ENCODE measurements at regions of chr11 and their contacts with region 1.

Region 1: GRCh38 chr11:70191495-70192140 is 11.5 kb upstream of the FADD start:
- DNase-seq: peak; percentile 36 to 61
- ATAC-seq: peak; percentile 47 to 77 (median 71)
- H3K4me3 ChIP-seq: no peak overlapping the region
- H3K4me3 Mint-ChIP-seq: no peak overlapping the region
- H3K27ac ChIP-seq: no peak overlapping the region
- H3K27ac Mint-ChIP-seq: no peak overlapping the region
- H3K4me1 ChIP-seq: peaks cover 4% of the 10 kb centered on the region
- H3K4me1 Mint-ChIP-seq: peaks cover 5 to 9% of the 10 kb centered on the region in 2 donors
- H3K27me3 ChIP-seq: peaks cover 5% of the 10 kb centered on the region
- H3K27me3 Mint-ChIP-seq: peaks cover 0 to 6% of the 10 kb centered on the region in 2 donors
- CTCF ChIP-seq: peak; percentile 43

Region 2: DNA sequence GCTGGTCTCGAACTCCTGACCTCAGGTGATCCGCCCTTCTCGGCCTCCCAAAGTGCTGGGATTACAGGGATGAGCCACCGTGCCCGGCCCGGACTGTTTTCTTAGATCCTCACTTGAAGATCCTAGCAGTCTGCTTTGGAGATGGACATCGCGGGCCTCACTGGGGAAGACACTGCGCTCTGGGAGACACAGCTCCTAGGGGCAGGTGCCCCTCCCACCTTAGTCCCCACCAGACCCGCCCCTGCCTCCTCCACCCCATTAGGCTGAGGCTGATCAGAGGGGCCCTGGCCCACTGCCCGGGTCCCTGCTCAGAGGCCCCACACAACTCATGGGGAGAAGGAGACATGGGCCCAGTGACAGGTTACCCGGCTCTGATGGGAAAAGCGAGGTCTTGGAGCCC is 505.2 kb before region 1 on chr11:
- intact Hi-C with region 1: loop called (anchors 5 kb)
- DNase-seq: no peak
- ATAC-seq: no peak
- H3K4me3 ChIP-seq: no peak overlapping the region
- H3K4me3 Mint-ChIP-seq: no peak overlapping the region
- H3K27ac ChIP-seq: no peak overlapping the region
- H3K27ac Mint-ChIP-seq: no peak overlapping the region
- H3K4me1 ChIP-seq: peaks cover 7% of the 10 kb centered on the region
- H3K4me1 Mint-ChIP-seq: peaks cover 0 to 9% of the 10 kb centered on the region in 2 donors
- H3K27me3 ChIP-seq: peaks cover 5% of the 10 kb centered on the region
- H3K27me3 Mint-ChIP-seq: peaks cover 26 to 27% of the 10 kb centered on the region in 2 donors
- CTCF ChIP-seq: no peak

Region 3: DNA sequence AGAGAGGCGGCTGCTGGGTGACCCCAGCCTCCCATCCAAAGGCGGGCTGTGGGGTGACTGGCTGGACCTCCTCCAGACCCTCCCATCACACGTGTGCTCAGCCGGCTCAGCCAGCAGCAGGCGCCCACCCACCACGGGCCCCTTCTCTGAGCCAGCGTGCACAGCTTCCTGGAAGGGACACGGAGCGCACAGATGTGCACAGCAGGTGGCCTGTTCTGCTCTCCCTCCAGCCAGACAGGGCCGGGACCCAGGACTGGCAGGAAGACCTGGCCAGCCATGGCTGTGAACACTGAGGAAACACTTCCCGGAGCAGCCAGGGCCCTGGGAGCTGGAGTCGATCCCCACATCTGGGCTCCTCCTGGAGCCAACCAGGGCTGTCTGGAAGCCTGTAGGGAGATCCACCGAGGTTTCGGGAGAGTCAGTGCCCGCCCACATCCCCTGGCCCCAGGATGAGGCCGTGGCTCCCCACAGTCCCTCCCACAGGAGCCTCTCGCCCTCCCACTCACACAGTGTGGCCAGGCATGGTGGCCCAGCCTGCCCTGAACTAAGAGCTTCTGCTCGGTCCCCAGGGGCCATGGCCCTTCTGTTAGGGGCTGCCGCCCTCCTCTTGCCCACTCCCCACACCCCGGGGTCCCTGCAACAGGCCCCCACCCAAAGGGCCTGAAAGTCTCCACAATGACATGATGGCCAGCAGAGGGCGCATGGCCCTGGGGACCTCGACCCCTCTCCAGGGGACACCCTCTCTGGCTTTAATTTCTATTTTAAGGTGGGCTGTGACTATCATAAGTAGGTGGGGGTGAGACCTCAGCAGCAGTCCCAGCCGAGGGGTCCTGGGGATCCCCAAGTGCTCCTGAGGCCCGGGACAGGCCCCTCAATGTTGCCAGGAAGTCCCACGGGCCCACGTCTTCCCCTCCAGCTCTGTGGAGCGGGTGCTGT is 281.8 kb before region 1 on chr11:
- intact Hi-C with region 1: loop called (anchors 2 kb)
- DNase-seq: peak in 1 of 2 donors; percentile 45
- ATAC-seq: no peak
- H3K4me3 ChIP-seq: no peak overlapping the region
- H3K4me3 Mint-ChIP-seq: no peak overlapping the region
- H3K27ac ChIP-seq: no peak overlapping the region
- H3K27ac Mint-ChIP-seq: no peak overlapping the region
- H3K4me1 ChIP-seq: no peaks in the 10 kb centered on the region
- H3K4me1 Mint-ChIP-seq: no peaks in the 10 kb centered on the region
- H3K27me3 ChIP-seq: no peaks in the 10 kb centered on the region
- H3K27me3 Mint-ChIP-seq: peaks cover 0 to 12% of the 10 kb centered on the region in 2 donors
- CTCF ChIP-seq: peak; percentile 27

Region 4: GRCh38 chr11:69918938-69919650 is 272.5 kb before region 1 on chr11:
- intact Hi-C with region 1: loop called (anchors 1 kb)
- DNase-seq: peak; percentile 57 to 76
- ATAC-seq: peak in 2 of 3 donors; percentile 49 to 75
- H3K4me3 ChIP-seq: no peak overlapping the region
- H3K4me3 Mint-ChIP-seq: no peak overlapping the region
- H3K27ac ChIP-seq: no peak overlapping the region
- H3K27ac Mint-ChIP-seq: no peak overlapping the region
- H3K4me1 ChIP-seq: no peaks in the 10 kb centered on the region
- H3K4me1 Mint-ChIP-seq: peaks cover 0 to 9% of the 10 kb centered on the region in 2 donors
- H3K27me3 ChIP-seq: peaks cover 2% of the 10 kb centered on the region
- H3K27me3 Mint-ChIP-seq: peaks cover 15 to 16% of the 10 kb centered on the region in 2 donors
- CTCF ChIP-seq: peak; percentile 76